ENCODE measurements at regions of chr18 and their contacts with region 1.

Region 1: GRCh38 chr18:44680266-44681075 is at the start of gene SETBP1:
- DNase-seq: peak; percentile 81 to 92
- H3K4me3 ChIP-seq: peak within 1 kb of the TSS; percentile 72
- H3K27ac ChIP-seq: peak within 1 kb of the TSS; percentile 99 to 100
- H3K4me1 ChIP-seq: peaks cover 0 to 45% (median 22%) of the 10 kb centered on the region in 4 donors
- H3K27me3 ChIP-seq: no peaks in the 10 kb centered on the region
- CTCF ChIP-seq: peak in 1 of 2 experiments; percentile 7

Region 2: GRCh38 chr18:44700652-44701051 is 20.2 kb after region 1 on chr18:
- intact Hi-C with region 1: no loop called
- DNase-seq: peak; percentile 48 to 81
- H3K4me3 ChIP-seq: no peak overlapping the region
- H3K27ac ChIP-seq: peak overlapping the region; percentile 75 to 76
- H3K4me1 ChIP-seq: peaks cover 0 to 93% (median 47%) of the 10 kb centered on the region in 4 donors
- H3K27me3 ChIP-seq: no peaks in the 10 kb centered on the region
- CTCF ChIP-seq: no peak

Region 3: GRCh38 chr18:44771956-44772917 is 91.8 kb after region 1 on chr18:
- intact Hi-C with region 1: loop called (anchors 10 kb)
- DNase-seq: no peak
- H3K4me3 ChIP-seq: no peak overlapping the region
- H3K27ac ChIP-seq: peak overlapping the region; percentile 14 to 36
- H3K4me1 ChIP-seq: peaks cover 0 to 57% (median 10%) of the 10 kb centered on the region in 4 donors
- H3K27me3 ChIP-seq: no peaks in the 10 kb centered on the region
- CTCF ChIP-seq: no peak

Region 4: DNA sequence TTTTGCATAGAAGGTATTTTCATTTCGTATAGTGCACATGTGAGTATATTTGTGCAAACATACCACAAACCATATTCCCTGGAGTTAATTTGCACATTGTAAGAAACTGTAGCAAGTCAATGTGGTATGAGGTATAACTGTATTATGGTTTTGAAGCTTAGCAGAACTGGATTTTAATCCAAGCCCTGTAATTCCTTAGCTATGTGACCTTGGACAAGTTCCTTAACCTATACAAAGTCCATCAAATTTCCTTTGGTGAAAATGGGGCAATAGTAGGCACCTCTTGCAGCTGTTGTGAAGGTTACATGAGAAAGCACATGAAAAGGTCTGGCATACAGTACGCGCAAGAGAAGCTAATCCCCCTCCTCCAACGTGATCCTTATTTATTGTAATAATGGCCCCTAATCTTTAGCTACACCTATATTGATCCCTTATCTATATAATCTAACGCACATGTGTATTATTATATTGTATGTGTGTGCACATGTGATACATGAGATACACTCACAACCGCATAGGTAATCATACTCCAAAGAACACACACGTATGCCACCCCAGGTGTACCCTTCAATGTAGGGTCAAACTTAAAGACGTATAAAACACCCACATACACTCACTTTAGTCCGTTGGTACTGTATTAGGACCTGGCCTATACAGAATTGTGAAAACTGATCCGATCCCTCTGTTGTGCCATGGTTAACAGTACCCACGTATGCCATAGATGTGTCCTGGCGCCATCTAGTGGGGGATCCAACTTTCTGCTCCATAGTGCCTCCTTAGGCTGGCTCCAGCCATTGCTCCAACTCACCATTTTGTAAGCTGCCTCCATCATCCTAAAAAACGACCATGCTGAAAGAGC is 531.9 kb after region 1 on chr18:
- intact Hi-C with region 1: loop called (anchors 10 kb)
- DNase-seq: peak; percentile 82 to 86
- H3K4me3 ChIP-seq: no peak overlapping the region
- H3K27ac ChIP-seq: no peak overlapping the region
- H3K4me1 ChIP-seq: no peaks in the 10 kb centered on the region
- H3K27me3 ChIP-seq: no peaks in the 10 kb centered on the region
- CTCF ChIP-seq: peak; percentile 80 to 84